Mammary epithelial cell (primary cell): ENCODE measurements at regions of chr12 and their contacts with region 1.

Region 1: DNA sequence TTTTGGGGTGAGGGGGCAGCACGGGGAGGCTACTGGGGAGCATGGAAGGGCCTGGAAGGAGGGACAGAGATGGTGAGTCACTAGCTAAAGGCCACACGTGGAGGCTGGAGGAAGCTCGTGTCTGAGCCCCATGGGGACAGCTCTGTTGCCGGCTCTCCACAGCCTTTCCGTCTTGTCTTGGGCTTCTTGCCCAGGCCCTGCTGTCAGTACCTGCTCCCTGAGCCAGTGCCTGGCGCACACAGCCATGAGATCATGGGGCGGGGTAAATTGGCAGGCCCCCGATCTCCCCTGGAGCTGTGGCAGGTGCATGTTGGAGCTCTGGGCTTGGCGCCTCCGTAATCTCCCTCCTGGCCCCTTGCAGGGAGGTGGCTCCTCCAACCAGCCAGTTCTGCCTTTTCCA is 16.1 kb upstream of the KRT80 start:
- DNase-seq: peak; percentile 52
- H3K4me3 ChIP-seq: no peak overlapping the region
- H3K27ac ChIP-seq: no peak overlapping the region
- H3K4me1 ChIP-seq: peaks cover 60% of the 10 kb centered on the region
- H3K27me3 ChIP-seq: no peaks in the 10 kb centered on the region
- CTCF ChIP-seq: no peak

Region 2: GRCh38 chr12:52171950-52172512 is 35.9 kb before region 1 on chr12:
- CTCF ChIA-PET with region 1: no interaction called
- dilution Hi-C with region 1: no loop called
- in situ Hi-C with region 1: loop called in 1 of 2 experiments (anchors 5 kb)
- intact Hi-C with region 1: no loop called
- DNase-seq: peak; percentile 70
- H3K4me3 ChIP-seq: no peak overlapping the region
- H3K27ac ChIP-seq: no peak overlapping the region
- H3K4me1 ChIP-seq: peaks cover 20% of the 10 kb centered on the region
- H3K27me3 ChIP-seq: no peaks in the 10 kb centered on the region
- CTCF ChIP-seq: peak; percentile 48 to 56